ENCODE measurements at regions of chr7 and their contacts with region 1.

Region 1: DNA sequence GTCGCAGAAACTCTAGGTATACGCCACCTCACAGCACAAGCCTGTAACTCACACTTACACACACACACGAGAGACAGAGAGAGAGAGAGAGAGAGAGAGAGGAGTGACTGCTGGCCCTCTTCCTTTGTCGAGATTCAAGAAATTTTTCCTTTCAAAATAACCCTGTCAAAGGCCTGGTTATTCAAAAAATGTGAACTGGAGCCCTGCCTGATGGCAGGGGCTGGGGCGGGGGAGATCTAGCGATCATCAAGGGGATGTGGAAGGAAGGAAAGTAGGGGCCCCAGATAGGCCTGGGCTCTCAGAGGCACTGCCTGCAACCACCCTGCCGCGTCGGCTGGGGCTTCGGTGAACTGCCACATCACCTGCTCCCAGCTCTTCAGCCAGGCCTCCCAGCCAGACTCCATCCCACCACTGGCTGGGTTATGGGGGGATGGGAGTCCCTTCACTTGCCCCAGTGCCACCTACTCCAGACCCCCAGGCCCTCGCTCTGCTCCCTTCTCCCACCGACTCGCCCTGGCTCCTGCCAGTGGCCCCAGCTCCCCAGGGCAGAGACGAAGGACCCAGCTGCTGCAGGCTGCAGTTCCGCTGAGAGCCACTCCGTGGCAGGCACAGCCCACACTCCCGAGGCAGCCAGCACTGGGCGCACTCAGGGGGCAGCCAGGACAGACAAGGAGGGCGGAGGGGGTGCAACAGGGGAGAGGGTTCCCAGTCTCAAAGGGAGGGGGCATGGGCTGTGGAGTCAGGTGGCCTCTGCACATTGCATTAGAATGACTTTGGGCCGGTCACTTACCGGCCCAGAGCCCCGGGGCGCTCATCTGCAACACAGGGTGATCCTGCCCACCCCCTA is 15.3 kb downstream of the KCNH2 start:
- DNase-seq: peak; percentile 87
- CTCF ChIP-seq: peak; percentile 99

Region 2: GRCh38 chr7:150778738-150779301 is 184.0 kb before region 1 on chr7:
- CTCF ChIA-PET with region 1: no interaction called
- POLR2A ChIA-PET with region 1: no interaction called
- DNase-seq: peak; percentile 59
- CTCF ChIP-seq: peak; percentile 80

Region 3: DNA sequence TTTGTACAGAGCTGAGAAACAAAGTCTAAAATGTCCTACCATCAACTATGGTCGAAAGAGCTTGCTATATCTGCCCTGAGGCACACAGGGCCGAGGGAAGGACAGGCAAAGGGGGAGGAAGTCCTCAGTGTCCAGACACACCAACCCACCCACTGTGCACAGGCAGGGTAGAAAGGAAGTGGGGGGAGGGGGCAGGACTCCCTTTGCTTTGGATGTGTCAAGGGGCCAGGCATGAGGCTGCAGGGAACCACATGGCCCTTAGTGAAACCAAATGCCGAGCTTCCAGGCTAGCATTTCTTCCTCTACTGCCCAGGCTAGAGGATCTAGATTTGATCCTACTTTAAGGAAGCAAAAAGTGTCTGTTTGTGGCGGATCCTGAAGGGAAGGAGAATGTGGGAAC is 13.2 kb before region 1 on chr7:
- CTCF ChIA-PET with region 1: interaction called, 10 read pairs
- POLR2A ChIA-PET with region 1: no interaction called
- DNase-seq: no peak
- CTCF ChIP-seq: no peak

Region 4: GRCh38 chr7:150988230-150989226 is 25.8 kb after region 1 on chr7:
- CTCF ChIA-PET with region 1: interaction called, 53 read pairs
- POLR2A ChIA-PET with region 1: no interaction called
- DNase-seq: peak; percentile 78
- CTCF ChIP-seq: peak; percentile 73

Region 5: DNA sequence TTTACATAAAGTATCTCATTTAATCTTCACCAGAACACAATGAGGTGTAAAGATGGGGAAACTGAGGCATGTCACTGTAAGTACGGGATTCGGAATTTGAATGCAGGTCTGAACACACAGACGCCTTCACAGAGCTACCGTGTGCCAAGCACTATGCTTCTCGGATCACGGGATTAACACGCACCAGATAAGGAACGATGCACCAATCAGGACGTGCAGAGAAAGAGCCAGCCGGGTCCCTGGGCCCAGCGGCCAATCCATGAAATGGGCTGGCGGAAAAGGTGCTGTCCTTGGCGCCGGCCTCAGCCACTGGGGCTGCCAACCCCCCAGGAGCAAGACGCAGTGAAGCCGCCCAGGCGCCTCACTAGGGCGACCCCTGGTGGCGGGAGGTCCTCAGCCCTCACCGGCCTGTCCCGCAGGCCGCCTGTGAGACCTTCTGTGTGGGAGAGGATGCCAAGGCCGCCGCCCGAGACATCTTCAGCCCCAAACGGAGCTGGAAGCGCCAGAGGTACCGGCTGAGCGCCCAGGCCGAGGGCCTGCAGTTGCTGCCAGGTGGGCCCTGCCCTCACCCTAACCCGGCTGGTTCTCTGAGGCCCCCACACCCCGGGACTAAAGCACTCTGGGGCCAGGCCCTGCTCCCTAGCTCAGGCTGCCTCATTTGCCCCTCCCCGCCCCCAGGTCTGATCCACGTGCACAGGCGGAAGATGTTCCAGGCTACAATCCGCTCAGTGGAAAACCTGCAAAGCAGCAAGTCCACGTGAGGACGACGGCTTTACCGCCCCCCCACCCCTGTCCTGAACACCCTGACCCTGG is 45.9 kb after region 1 on chr7:
- CTCF ChIA-PET with region 1: interaction called, 46 read pairs
- POLR2A ChIA-PET with region 1: no interaction called
- DNase-seq: peak; percentile 83
- CTCF ChIP-seq: peak; percentile 83

Region 6: DNA sequence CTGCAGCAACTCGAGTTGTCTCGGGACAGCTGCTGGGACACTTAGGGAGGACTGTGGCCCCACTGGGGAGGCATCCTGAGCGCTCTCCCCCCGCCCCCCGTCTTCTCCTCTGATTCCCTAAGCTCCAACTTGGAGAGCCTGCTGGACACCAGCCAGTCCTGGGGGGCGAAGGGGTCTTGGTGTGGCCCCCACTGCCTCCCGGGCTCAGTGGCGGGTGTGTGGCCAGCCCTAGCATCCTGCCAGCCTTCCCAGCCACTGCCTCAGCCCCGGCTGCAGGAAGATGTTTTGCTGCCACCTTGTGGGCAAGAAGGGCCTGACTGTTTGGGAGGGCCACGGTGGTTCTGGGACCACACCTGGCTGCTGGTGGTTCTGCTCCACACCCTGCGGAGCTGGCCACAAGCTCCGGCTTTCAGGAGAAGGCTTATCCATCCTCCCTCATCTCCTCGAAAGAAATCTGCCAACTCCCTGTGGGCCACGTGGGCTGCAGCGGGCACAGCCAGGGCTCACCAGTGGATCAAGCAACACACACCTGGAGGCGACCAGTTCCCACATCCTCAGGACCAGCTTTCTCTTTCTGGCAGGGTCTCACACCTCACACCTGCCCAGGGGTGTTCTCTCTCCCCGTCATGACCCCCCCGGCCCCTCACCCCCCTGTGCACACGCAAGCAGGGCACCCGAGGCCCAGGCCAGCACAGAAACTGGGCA is 148.3 kb after region 1 on chr7:
- CTCF ChIA-PET with region 1: interaction called, 32 read pairs
- POLR2A ChIA-PET with region 1: no interaction called
- DNase-seq: peak; percentile 92
- CTCF ChIP-seq: peak; percentile 94

Region 7: DNA sequence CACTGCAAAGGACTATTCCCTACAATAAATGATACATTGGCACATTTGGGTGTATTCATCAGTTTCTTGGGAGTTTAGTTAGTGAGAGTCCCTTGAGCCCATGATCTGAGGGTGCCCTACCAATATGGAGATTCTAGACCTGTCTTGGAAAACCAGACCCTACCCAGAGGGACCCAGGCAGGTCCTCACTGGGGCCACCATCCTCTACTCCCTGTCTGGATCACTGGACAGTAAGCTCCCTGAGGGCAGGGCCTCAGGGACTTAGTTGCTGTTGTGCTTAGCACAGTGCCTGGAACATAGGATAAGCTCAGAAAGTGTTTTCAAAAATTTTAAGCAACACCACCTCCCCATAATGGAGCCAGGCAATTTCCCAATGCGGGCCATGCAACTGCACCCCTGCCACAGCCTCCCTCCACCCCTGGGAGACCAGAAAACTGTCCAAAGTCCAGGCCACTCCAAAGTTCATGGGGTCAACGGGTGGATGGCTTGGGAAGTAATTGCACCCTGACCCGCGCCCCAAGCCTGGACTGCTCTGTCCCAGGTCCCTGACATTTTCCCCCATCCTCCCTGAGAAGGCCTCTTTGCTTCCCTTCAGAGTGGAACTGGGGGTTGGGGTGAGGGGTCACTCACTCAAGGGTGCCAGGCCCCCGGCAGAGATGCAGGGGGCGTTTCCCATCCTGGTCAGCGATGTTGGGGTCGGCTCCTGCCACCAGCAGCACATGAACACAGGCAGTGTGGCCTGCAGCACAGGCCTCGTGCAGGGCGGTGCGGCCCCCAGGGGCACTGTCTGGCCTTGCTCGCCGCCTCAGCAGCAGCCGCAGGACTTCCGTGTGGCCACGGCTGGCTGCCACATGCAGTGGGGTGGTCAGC is 223.2 kb after region 1 on chr7:
- CTCF ChIA-PET with region 1: no interaction called
- POLR2A ChIA-PET with region 1: no interaction called
- DNase-seq: no peak
- CTCF ChIP-seq: no peak

Measured in GM10248 (cell line).